ENCODE measurements at regions of chr3 and their contacts with region 1.

Region 1: DNA sequence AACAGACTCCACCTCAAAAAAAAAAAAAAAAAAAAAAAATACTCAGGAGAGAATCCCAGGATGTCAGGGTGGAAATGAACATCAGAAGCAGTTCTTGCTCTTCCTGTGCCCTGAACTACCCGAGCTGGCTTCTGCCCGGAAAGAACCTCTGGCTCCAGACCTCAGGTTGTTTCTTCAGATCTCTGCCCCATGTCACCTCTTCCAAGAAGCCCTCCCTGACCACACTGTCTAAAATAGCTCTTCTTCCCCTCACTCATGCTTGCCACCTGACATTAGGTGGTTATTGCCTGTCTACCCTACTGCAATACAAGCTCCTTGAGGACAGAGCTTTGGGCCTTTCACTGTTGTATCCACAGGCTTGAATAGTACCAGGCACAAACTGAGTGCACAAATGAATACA is 8.2 kb downstream of the TKT start:
- DNase-seq: no peak
- ATAC-seq: no peak

Region 2: DNA sequence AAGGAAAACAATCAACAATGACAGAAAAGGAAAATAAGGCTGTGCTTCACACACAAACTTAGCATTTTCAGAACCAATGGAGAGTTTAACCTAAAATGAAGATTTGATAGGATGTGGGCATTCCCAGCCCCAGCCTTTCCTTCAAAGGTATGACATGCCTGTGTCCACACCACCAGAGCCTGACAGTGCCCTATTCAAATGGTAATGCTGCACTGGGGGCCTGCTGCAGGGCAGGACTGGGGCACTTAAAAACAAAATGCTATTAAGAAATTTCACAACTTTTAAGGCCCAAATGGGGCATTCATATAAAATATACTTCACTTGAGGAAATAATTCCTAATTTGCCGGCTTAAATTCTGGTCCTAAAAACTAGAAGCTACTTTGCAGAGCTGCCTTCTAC is 39.1 kb after region 1 on chr3:
- intact Hi-C with region 1: loop called (anchors 1 kb)
- DNase-seq: no peak
- ATAC-seq: peak; percentile 43

Region 3: GRCh38 chr3:53300826-53301225 is 53.2 kb after region 1 on chr3:
- intact Hi-C with region 1: no loop called
- DNase-seq: no peak
- ATAC-seq: no peak

Region 4: GRCh38 chr3:53486961-53487654 is 239.5 kb after region 1 on chr3:
- intact Hi-C with region 1: no loop called
- DNase-seq: no peak
- ATAC-seq: no peak

Measured in sciatic nerve (tissue), 2 donors.